Activated CD8-positive, alpha-beta T cell treated with anti-CD3 and anti-CD28 coated beads for 36 hours (primary cell): ENCODE measurements at regions of chr15 and their contacts with region 1.

Region 1: GRCh38 chr15:84600851-84601838 is at the start of gene ZSCAN2:
- DNase-seq: peak; percentile 98
- ATAC-seq: peak; percentile 96
- H3K4me3 Mint-ChIP-seq: peak within 1 kb of the TSS; percentile 91
- H3K27ac Mint-ChIP-seq: peak within 1 kb of the TSS; percentile 80
- H3K4me1 Mint-ChIP-seq: peaks cover 73% of the 10 kb centered on the region
- H3K27me3 Mint-ChIP-seq: no peaks in the 10 kb centered on the region
- CTCF ChIP-seq: no peak
- total RNA-seq, gene ZSCAN2: 6.6 to 7.6 TPM

Region 2: DNA sequence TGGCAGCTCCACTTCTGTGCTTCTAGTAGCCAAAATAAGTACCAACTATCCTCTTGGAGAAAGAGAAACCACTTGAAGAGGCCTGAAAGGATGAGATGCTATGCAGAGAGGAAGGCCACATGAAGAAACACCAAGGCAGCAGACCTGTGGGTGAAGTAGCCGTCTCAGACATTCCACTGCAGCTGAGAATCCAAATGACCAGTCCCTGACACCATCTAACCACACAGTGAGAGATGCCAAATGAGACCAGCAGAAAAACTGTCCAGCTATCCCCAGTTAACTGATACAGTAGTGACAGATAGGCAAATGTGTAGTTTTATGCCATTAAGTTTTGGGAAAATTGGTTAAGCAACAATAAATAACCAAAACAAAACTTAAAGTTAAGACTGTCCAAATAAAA is 48.2 kb before region 1 on chr15:
- CTCF ChIA-PET with region 1: no interaction called
- POLR2A ChIA-PET with region 1: no interaction called
- intact Hi-C with region 1: no loop called
- DNase-seq: no peak
- ATAC-seq: no peak
- H3K4me3 Mint-ChIP-seq: no peak overlapping the region
- H3K27ac Mint-ChIP-seq: no peak overlapping the region
- H3K4me1 Mint-ChIP-seq: peaks cover 3% of the 10 kb centered on the region
- H3K27me3 Mint-ChIP-seq: no peaks in the 10 kb centered on the region
- CTCF ChIP-seq: no peak

Region 3: GRCh38 chr15:84633311-84634227 is 32.4 kb after region 1 on chr15:
- CTCF ChIA-PET with region 1: interaction called, 48 read pairs
- POLR2A ChIA-PET with region 1: interaction called, 19 read pairs
- intact Hi-C with region 1: loop called (anchors 2 kb)
- DNase-seq: peak; percentile 81
- ATAC-seq: peak; percentile 48
- H3K4me3 Mint-ChIP-seq: peak overlapping the region; percentile 94
- H3K27ac Mint-ChIP-seq: peak overlapping the region; percentile 96
- H3K4me1 Mint-ChIP-seq: peaks cover 33% of the 10 kb centered on the region
- H3K27me3 Mint-ChIP-seq: no peaks in the 10 kb centered on the region
- CTCF ChIP-seq: no peak

Region 4: GRCh38 chr15:84871428-84872305 is 270.5 kb after region 1 on chr15:
- CTCF ChIA-PET with region 1: interaction called, 19 read pairs
- POLR2A ChIA-PET with region 1: no interaction called
- intact Hi-C with region 1: loop called (anchors 5 kb)
- DNase-seq: peak; percentile 9
- ATAC-seq: no peak
- H3K4me3 Mint-ChIP-seq: no peak overlapping the region
- H3K27ac Mint-ChIP-seq: no peak overlapping the region
- H3K4me1 Mint-ChIP-seq: no peaks in the 10 kb centered on the region
- H3K27me3 Mint-ChIP-seq: no peaks in the 10 kb centered on the region
- CTCF ChIP-seq: no peak